Caco-2 (cell line): ENCODE measurements at regions of chr4 and their contacts with region 1.

Region 1: DNA sequence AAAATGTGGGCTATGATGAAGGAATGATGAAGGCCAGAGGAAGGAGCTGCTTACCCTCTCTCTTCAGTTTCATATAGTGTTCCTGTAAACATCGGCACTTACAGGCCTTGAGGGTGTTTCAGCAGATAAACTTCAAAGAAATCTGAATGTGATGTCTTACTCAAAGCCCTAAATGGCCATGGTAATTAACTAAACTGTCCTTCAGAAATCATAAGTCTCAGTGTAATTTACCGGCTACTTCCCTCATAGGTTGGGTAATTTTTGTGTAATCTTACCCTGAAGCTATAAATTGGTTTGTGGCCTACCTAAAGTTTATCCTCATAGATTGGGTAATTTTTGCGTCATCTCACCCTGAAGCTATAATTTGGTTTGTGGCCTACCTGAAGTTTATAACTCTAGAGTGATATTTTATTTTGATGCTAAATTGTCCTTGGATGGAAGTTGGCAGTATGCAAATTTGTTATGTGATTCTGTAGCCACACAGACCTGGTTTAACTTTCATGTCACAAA is 2700.3 kb downstream of the ARAP2 start:
- DNase-seq: no peak
- H3K4me3 ChIP-seq: no peak overlapping the region
- H3K4me3 Mint-ChIP-seq: no peak overlapping the region
- H3K27ac Mint-ChIP-seq: no peak overlapping the region
- H3K4me1 ChIP-seq: no peaks in the 10 kb centered on the region
- H3K4me1 Mint-ChIP-seq: no peaks in the 10 kb centered on the region
- H3K27me3 ChIP-seq: no peaks in the 10 kb centered on the region
- H3K27me3 Mint-ChIP-seq: no peaks in the 10 kb centered on the region
- CTCF ChIP-seq: no peak

Region 2: DNA sequence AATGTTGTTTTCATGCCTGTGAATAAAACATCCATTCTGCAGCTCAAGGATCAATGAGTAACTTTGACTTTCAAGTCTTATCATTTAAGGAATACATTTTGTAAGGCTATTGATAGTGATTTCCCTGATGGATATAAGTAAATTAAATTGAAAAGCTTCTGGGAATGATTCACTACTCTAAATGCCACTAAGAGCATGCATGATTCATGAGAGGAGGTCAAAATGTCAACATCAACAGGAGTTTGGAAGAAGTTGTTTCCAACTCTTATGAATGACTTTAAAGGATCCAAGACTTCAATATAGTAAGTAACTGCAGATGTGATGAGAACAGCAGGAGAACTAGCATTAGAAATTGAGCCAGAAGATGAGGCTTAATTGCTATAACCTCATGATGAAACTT is 1336.5 kb before region 1 on chr4:
- CTCF ChIA-PET with region 1: no interaction called
- POLR2A ChIA-PET with region 1: interaction called, 12 read pairs
- intact Hi-C with region 1: no loop called
- DNase-seq: no peak
- H3K4me3 ChIP-seq: no peak overlapping the region
- H3K4me3 Mint-ChIP-seq: no peak overlapping the region
- H3K27ac Mint-ChIP-seq: no peak overlapping the region
- H3K4me1 ChIP-seq: no peaks in the 10 kb centered on the region
- H3K4me1 Mint-ChIP-seq: no peaks in the 10 kb centered on the region
- H3K27me3 ChIP-seq: no peaks in the 10 kb centered on the region
- H3K27me3 Mint-ChIP-seq: no peaks in the 10 kb centered on the region
- CTCF ChIP-seq: no peak